ENCODE measurements at regions of chr22 and their contacts with region 1.

Region 1: DNA sequence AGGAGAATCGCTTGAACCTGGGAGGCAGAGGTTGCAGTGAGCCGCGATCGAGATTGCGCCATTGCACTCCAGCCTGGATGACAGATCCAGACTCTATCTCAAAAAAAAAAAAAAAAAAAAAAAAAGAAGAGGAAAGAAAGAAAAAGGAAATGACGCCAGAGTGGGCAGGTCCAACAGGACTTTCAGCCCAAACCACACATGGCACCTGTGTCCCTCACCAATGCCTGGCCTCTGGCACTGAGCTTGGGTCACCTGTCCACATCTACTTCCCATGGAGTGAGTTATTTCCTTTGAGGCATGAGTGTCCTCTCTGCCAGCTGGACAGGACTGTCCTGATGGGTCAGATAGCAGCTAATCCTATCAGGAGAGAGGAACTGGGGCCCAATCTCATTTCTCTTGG is 15.2 kb upstream of the GCAT start:
- DNase-seq: no peak
- H3K4me3 ChIP-seq: no peak overlapping the region
- H3K27ac ChIP-seq: peak overlapping the region in 1 of 4 donors; percentile 53
- H3K4me1 ChIP-seq: no peaks in the 10 kb centered on the region
- H3K27me3 ChIP-seq: no peaks in the 10 kb centered on the region
- CTCF ChIP-seq: no peak
- EP300 ChIP-seq: no peak
- POLR2A ChIP-seq: no peak

Region 2: GRCh38 chr22:37643225-37643847 is 149.2 kb before region 1 on chr22:
- intact Hi-C with region 1: loop called (anchors 2 kb)
- DNase-seq: peak; percentile 92
- H3K4me3 ChIP-seq: no peak overlapping the region
- H3K27ac ChIP-seq: no peak overlapping the region
- H3K4me1 ChIP-seq: peaks cover 0 to 24% (median 21%) of the 10 kb centered on the region in 4 donors
- H3K27me3 ChIP-seq: peaks cover 0 to 7% (median 6%) of the 10 kb centered on the region in 3 donors
- CTCF ChIP-seq: peak; percentile 79 to 94 (median 91)
- EP300 ChIP-seq: no peak
- POLR2A ChIP-seq: no peak

Measured in sigmoid colon (tissue), 7 donors.